ENCODE measurements at regions of chr13 and their contacts with region 1.

Region 1: DNA sequence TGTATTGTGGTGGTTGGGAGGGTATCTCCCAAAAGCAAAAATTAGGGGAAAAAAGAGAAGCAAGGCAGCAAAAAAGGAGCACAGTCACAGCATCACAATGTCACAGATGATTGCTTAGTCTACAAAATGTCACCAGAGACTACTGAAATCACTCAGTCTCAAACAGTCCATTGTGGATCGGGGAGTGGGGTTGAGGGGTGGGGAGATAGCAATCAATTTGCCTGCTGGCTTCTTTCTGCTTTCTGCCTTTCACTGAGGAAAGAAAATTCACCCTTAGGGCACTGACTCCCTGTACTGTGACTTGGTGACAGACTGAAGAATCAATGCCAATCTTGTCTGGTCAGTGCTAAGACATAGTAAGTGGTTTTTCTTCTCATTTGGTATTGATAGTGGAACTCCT is 2127.1 kb upstream of the PCDH20 start:
- DNase-seq: no peak
- ATAC-seq: no peak
- H3K4me3 ChIP-seq: no peak overlapping the region
- H3K27ac ChIP-seq: no peak overlapping the region
- H3K4me1 ChIP-seq: no peaks in the 10 kb centered on the region
- H3K27me3 ChIP-seq: no peaks in the 10 kb centered on the region
- CTCF ChIP-seq: no peak
- POLR2A ChIP-seq: no peak

Region 2: DNA sequence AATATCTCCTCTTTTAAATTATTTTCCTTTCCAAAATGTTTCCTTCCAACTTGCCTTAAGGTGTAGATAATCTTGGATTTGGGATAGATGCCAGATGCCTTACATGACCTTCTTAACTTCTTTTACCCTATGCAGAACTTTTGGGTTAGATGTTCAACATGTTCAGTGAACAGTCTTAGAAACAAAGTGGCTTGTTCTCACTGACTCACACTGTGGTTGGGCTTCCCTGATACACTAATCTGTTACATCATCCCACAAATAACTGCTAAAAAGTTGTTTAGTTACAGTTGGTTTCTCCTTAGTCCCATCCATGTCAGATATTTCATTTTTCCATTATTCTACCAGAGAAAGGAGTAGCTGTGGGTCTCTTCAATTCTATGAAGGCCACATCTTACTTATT is 1049.2 kb after region 1 on chr13:
- intact Hi-C with region 1: loop called in 1 of 10 experiments (anchors 10 kb)
- DNase-seq: no peak
- ATAC-seq: no peak
- H3K4me3 ChIP-seq: no peak overlapping the region
- H3K27ac ChIP-seq: no peak overlapping the region
- H3K4me1 ChIP-seq: no peaks in the 10 kb centered on the region
- H3K27me3 ChIP-seq: no peaks in the 10 kb centered on the region
- CTCF ChIP-seq: no peak
- POLR2A ChIP-seq: no peak

Measured in heart left ventricle (tissue), 16 donors.